ENCODE measurements at regions of chr14 and their contacts with region 1.

Region 1: GRCh38 chr14:75132382-75133086 is 5.7 kb upstream of the NEK9 start:
- DNase-seq: peak in 23 of 35 experiments; percentile 6 to 87 (median 31)
- ATAC-seq: peak; percentile 73 to 95 (median 86)
- H3K4me3 ChIP-seq: no peak overlapping the region
- H3K4me3 Mint-ChIP-seq: no peak overlapping the region
- H3K27ac ChIP-seq: no peak overlapping the region
- H3K27ac Mint-ChIP-seq: peak overlapping the region; percentile 27 to 54
- H3K4me1 ChIP-seq: peaks cover 6 to 10% of the 10 kb centered on the region in 2 experiments
- H3K4me1 Mint-ChIP-seq: peaks cover 11 to 19% (median 15%) of the 10 kb centered on the region in 3 donors
- H3K27me3 ChIP-seq: no peaks in the 10 kb centered on the region
- H3K27me3 Mint-ChIP-seq: no peaks in the 10 kb centered on the region

Region 2: DNA sequence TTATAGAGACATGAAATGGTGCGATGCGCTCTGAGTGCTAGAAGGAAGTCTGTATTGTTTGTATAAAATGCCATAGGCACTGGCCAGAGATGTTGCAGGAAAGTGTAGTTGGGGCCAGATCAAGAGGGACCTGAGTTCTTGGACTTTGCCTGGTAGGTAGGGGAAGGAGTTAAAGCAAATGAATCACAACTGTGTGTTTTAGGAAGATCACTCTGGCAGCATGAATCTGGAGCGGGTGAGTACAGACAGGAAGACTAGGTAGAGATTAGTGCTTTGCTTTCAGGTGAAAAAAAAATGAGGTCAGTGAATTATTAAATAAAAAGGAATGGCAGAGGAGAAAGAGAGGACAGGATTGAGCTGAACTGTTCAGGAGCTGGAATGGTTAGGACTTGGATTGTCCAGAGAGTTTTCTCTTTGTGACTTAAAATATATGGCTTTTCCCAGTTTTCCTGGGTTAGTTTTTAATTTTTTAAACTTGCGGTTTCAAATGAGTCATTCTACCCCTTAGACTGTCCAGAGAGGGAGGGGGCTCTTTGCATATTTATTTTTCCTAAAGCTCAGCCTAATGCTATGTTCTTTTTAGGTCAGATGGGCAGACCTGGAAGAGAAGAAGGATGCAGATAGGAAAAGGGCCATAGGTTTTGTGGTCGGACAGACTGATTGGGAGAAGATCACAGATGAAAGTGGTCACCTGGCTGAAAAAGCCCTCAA is 297.7 kb before region 1 on chr14:
- CTCF ChIA-PET with region 1: no interaction called
- POLR2A ChIA-PET with region 1: no interaction called
- DNase-seq: no peak
- ATAC-seq: no peak
- H3K4me3 ChIP-seq: no peak overlapping the region
- H3K4me3 Mint-ChIP-seq: peak overlapping the region in 1 of 3 donors; percentile 70
- H3K27ac ChIP-seq: peak overlapping the region; percentile 96
- H3K27ac Mint-ChIP-seq: peak overlapping the region; percentile 98 to 99
- H3K4me1 ChIP-seq: peaks cover 19 to 46% of the 10 kb centered on the region in 2 experiments
- H3K4me1 Mint-ChIP-seq: peaks cover 52 to 57% (median 56%) of the 10 kb centered on the region in 3 donors
- H3K27me3 ChIP-seq: no peaks in the 10 kb centered on the region
- H3K27me3 Mint-ChIP-seq: no peaks in the 10 kb centered on the region

Region 3: DNA sequence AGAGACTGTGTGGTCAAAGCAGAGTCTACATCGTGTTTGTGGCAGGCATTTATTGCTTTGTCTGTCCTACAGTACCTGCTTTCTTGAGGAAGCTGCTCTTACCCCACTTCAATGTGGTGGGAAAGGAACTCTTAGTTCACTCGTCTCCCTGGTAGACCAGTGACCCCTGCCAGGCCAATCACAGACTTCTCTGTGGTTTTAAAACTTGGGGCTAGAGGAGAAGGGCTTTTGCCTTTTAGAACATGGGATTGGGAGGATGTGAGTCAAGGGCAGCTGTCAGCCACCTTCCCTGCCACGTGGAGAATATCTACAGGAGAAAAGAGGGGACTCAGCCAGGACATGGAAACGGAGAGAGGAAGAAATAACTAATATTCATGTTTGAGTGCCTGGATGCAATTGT is 80.6 kb after region 1 on chr14:
- CTCF ChIA-PET with region 1: no interaction called
- POLR2A ChIA-PET with region 1: no interaction called
- DNase-seq: no peak
- ATAC-seq: no peak
- H3K4me3 ChIP-seq: no peak overlapping the region
- H3K4me3 Mint-ChIP-seq: no peak overlapping the region
- H3K27ac ChIP-seq: no peak overlapping the region
- H3K27ac Mint-ChIP-seq: no peak overlapping the region
- H3K4me1 ChIP-seq: peaks cover 11 to 27% of the 10 kb centered on the region in 2 experiments
- H3K4me1 Mint-ChIP-seq: peaks cover 22 to 29% (median 26%) of the 10 kb centered on the region in 3 donors
- H3K27me3 ChIP-seq: no peaks in the 10 kb centered on the region
- H3K27me3 Mint-ChIP-seq: peaks cover 0 to 2% of the 10 kb centered on the region in 2 donors

Region 4: DNA sequence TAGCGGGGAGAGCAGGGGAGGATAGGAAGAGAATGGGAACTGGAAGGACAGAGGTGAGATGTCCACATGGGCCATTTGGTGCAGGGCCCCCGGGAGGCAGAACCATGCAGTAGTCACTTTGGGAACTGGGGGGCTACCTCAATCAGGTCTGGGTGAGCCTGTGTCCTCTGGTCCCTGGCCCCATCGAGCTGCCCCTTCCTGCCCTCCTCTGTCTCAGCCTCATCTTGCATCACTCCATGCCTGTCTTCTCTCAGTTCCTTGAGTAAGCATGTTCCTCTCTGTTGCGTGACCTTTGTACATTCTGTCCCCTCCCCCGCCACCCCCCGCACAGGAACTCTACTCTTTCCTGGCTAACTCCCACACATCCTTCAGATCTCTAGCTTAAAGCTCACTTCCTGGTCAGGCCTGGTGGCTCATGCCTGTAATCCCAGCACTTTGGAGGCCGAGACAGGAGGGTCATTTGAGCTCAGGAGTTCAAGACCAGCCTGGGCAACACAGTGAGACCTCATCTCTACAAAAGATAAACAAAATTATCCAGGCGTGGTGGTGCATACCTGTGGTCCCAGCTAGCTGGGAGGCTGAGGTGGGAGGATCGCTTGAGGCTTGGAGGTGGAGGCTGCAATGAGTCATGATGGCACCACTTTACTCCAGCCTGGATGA is 169.3 kb after region 1 on chr14:
- CTCF ChIA-PET with region 1: interaction called, 5 to 24 read pairs
- POLR2A ChIA-PET with region 1: interaction called in 1 of 2 experiments, 6 read pairs
- DNase-seq: peak in 1 of 35 experiments; percentile 25
- ATAC-seq: no peak
- H3K4me3 ChIP-seq: no peak overlapping the region
- H3K4me3 Mint-ChIP-seq: no peak overlapping the region
- H3K27ac ChIP-seq: no peak overlapping the region
- H3K27ac Mint-ChIP-seq: peak overlapping the region in 1 of 2 donors; percentile 55
- H3K4me1 ChIP-seq: peaks cover 3 to 15% of the 10 kb centered on the region in 2 experiments
- H3K4me1 Mint-ChIP-seq: peaks cover 11 to 21% (median 17%) of the 10 kb centered on the region in 3 donors
- H3K27me3 ChIP-seq: no peaks in the 10 kb centered on the region
- H3K27me3 Mint-ChIP-seq: no peaks in the 10 kb centered on the region

Region 5: DNA sequence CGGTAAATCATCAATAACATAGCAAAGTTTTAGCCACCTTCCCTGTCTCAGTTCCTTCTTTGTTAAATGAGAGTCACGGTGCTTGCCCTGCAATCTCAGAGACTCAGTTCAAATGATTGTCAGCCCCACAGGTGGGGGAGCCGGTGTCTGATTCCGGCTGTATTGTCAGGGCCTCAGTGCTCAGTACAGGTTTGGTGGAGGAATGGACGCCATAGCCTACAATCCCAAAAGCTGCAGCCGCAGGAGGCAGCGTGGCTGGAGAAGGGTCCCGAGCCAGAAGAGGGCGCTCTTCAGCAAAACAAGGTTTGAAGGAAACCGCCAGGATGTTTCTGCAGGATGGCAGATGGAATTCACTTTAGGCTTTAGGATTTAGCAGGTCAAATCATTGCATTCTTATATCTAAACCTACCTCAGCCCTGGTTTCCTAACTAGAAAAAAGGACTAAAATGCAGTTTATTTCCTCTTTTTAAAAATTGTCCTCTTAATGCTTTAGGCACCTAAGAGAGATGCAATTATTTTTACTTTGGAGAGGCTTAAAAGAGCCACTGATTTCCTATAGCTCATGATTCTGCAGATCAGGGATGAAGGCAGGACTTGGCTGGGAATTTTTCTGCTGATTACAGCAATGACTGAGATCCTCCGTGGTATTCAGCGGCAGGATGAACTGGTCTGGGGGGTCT is 175.3 kb after region 1 on chr14:
- CTCF ChIA-PET with region 1: interaction called, 5 to 24 read pairs
- POLR2A ChIA-PET with region 1: interaction called in 1 of 2 experiments, 6 read pairs
- DNase-seq: peak in 33 of 35 experiments; percentile 25 to 85 (median 63)
- ATAC-seq: peak; percentile 43 to 78 (median 64)
- H3K4me3 ChIP-seq: no peak overlapping the region
- H3K4me3 Mint-ChIP-seq: no peak overlapping the region
- H3K27ac ChIP-seq: no peak overlapping the region
- H3K27ac Mint-ChIP-seq: no peak overlapping the region
- H3K4me1 ChIP-seq: peaks cover 0 to 11% of the 10 kb centered on the region in 2 experiments
- H3K4me1 Mint-ChIP-seq: peaks cover 3 to 10% (median 7%) of the 10 kb centered on the region in 3 donors
- H3K27me3 ChIP-seq: no peaks in the 10 kb centered on the region
- H3K27me3 Mint-ChIP-seq: no peaks in the 10 kb centered on the region